ENCODE measurements at regions of chr19 and their contacts with region 1.

Region 1: DNA sequence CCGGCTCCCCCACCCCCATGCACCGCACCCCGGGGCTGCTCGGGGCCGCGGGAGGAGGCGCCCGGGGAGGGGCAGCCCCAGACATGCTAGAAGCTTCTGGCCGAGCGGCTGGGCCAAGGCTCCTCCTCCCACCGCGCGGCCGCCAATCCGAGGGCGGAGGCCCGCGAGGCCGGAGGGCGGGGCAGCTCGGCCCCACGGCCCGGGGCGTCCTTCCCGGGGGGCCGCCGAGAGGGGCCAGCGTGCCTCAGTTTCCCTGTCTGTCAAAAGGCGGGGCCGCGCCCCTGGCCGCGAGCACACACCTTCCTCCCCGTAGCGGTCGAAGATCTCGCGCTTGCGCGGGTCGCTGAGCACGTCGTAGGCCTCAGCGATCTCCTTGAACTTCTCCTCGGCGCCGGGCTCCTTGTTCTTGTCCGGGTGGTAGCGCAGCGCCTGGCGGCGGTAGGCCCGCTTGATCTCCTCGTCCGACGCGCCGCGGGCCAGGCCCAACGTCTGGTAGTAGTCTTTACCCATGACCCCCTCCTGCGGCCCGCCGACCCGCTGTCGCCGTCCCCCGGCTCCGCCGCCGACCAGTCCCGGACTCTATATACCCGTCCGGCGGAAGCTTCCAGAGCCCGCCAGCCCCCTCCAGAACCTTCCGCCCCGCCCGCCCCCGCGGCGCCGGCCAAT is at the start of gene DNAJB1:
- DNase-seq: peak; percentile 94
- H3K4me3 ChIP-seq: peak within 1 kb of the TSS; percentile 87 to 90
- H3K27ac ChIP-seq: peak within 1 kb of the TSS; percentile 93 to 96
- H3K4me1 ChIP-seq: peaks cover 24 to 44% of the 10 kb centered on the region in 2 experiments; a peak in 3 of 4 replicates
- H3K27me3 ChIP-seq: no peaks in the 10 kb centered on the region
- CTCF ChIP-seq: no peak
- EP300 ChIP-seq: peak in 1 of 2 experiments; percentile 67; a peak in 2 of 4 replicates
- RAD21 ChIP-seq: no peak
- polyA plus RNA-seq, gene DNAJB1: 95.7 and 103 TPM in 2 replicates

Region 2: GRCh38 chr19:14496028-14496833 is 21.7 kb before region 1 on chr19 and contains the start of gene GIPC1:
- CTCF ChIA-PET with region 1: interaction called, 4 read pairs
- POLR2A ChIA-PET with region 1: interaction called, 15 read pairs
- DNase-seq: peak; percentile 100
- H3K4me3 ChIP-seq: peak within 1 kb of the TSS; percentile 65 to 93
- H3K27ac ChIP-seq: peak within 1 kb of the TSS in 1 of 2 experiments; percentile 67; a peak in 2 of 4 replicates
- H3K4me1 ChIP-seq: peaks cover 4 to 25% of the 10 kb centered on the region in 2 experiments; a peak in 2 of 4 replicates
- H3K27me3 ChIP-seq: no peaks in the 10 kb centered on the region
- CTCF ChIP-seq: no peak
- EP300 ChIP-seq: peak in 1 of 2 experiments; percentile 44; a peak in 3 of 4 replicates
- RAD21 ChIP-seq: no peak
- polyA plus RNA-seq, gene GIPC1: 138 and 144 TPM in 2 replicates

Region 3: GRCh38 chr19:14505488-14506432 is 12.2 kb before region 1 on chr19:
- CTCF ChIA-PET with region 1: interaction called, 30 read pairs
- POLR2A ChIA-PET with region 1: interaction called, 6 read pairs
- DNase-seq: peak; percentile 78
- H3K4me3 ChIP-seq: peak overlapping the region in 1 of 2 experiments; percentile 23; a peak in 1 of 4 replicates
- H3K27ac ChIP-seq: peak overlapping the region; percentile 29 to 80; a peak in 3 of 4 replicates
- H3K4me1 ChIP-seq: 0 out of 4 replicates have a peak, but pooled peaks cover 0 to 3% of the 10 kb centered on the region in 2 experiments
- H3K27me3 ChIP-seq: no peaks in the 10 kb centered on the region
- CTCF ChIP-seq: peak; percentile 78
- EP300 ChIP-seq: no peak
- RAD21 ChIP-seq: peak; percentile 20; the same call in 1 of the 2 replicates

Measured in SK-N-SH (cell line).